Heart right ventricle (tissue), 16 donors: ENCODE measurements at regions of chr7 and their contacts with region 1.

Region 1: DNA sequence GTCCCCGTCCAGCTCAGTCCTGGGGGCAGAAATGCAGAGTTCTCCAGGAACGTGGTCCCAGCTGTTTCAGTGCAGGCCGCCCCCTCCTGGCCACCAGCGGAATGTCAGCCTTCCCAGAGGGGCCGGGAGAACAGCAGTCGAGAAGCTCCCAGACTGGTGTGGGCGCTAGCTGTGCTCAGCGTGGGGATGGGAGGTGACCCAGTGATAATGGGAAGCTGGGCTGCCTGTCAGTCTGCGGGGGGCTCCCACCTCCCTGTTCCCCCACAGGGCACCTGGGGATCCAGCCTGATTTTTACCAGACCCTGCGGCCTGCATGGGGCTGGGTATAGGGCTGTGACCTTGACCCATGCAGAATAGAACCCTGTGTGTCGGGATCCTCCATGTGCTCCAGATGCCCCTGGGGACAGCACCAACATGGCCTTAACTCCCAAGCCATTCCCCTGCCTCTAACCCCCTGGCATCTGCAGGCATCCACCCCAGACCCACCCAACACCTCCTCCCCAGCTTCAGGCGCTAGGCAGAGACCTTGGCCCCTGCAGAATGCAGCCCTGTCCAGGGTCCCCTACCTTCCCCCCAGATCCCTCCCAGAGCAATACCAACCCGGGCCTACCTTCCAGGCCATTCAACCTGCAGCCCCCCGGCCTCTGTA is 946 bp upstream of the ELN start:
- DNase-seq: peak; percentile 85
- ATAC-seq: peak; percentile 58 to 76 (median 73)
- H3K4me3 ChIP-seq: peak overlapping the region in 5 of 10 donors; percentile 60 to 77 (median 64)
- H3K27ac ChIP-seq: peak overlapping the region; percentile 8 to 92 (median 82)
- H3K4me1 ChIP-seq: peaks cover 10 to 79% (median 49%) of the 10 kb centered on the region in 9 donors
- H3K27me3 ChIP-seq: peaks cover 0 to 62% (median 10%) of the 10 kb centered on the region in 7 donors
- CTCF ChIP-seq: peak; percentile 91 to 97 (median 94)

Region 2: GRCh38 chr7:73865738-73866445 is 161.1 kb before region 1 on chr7:
- intact Hi-C with region 1: loop called (anchors 1 to 5 kb)
- DNase-seq: no peak
- ATAC-seq: peak in 7 of 8 donors; percentile 47 to 84 (median 62)
- H3K4me3 ChIP-seq: no peak overlapping the region
- H3K27ac ChIP-seq: no peak overlapping the region
- H3K4me1 ChIP-seq: peaks cover 0 to 23% (median 9%) of the 10 kb centered on the region in 9 donors
- H3K27me3 ChIP-seq: peaks cover 0 to 4% (median 0%) of the 10 kb centered on the region in 7 donors
- CTCF ChIP-seq: peak; percentile 55 to 79 (median 71)

Region 3: GRCh38 chr7:73879977-73880681 is 146.9 kb before region 1 on chr7:
- intact Hi-C with region 1: loop called in 2 of 10 experiments (anchors 5 kb)
- DNase-seq: peak in 1 of 2 donors; percentile 66
- ATAC-seq: peak; percentile 29 to 82 (median 54)
- H3K4me3 ChIP-seq: no peak overlapping the region
- H3K27ac ChIP-seq: peak overlapping the region in 9 of 10 donors; percentile 19 to 90 (median 78)
- H3K4me1 ChIP-seq: peaks cover 25 to 50% (median 31%) of the 10 kb centered on the region in 9 donors
- H3K27me3 ChIP-seq: peaks cover 0 to 10% (median 0%) of the 10 kb centered on the region in 7 donors
- CTCF ChIP-seq: no peak

Region 4: DNA sequence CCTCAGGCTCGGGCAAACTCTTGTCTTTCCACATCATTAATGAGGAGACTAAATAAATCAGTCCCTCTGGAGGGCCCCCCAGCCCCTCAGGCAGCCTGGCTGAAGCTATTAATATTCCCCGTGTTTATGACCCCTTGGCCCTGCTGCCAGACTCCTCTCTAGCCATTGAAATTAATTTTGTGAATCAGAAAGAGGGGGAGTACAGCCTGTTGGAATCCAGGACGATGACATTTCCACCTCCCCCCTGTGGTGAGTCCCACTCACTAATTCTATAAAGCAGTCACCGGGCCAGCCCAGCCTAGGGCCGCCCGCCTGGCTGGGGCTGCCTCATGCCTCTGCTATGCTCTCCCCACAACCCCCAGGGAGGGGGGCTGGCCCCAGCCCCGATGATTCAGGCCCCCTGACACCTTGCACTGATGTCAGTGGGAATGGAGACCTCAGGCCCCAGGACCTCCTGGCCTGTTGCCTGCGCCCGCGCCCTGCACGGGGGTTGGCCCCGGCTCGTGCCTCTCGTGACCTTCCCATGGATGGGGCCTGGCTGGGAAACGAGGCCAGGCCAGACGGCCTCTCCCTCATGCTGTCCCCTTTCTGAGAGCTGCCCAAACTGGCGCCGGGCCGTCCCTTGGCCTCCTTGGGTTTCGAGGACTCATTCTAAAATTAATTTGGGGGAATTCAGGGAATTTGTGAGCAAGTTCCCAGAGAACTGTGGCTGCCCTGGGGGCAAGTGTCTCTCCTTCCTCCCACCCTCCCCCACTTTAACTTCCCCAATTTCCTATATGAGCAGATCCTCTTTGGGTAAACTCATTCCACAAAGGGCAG is 132.1 kb before region 1 on chr7:
- intact Hi-C with region 1: loop called in 3 of 10 experiments (anchors 5 to 10 kb)
- DNase-seq: peak; percentile 71 to 86
- ATAC-seq: peak; percentile 61 to 80 (median 78)
- H3K4me3 ChIP-seq: no peak overlapping the region
- H3K27ac ChIP-seq: peak overlapping the region in 8 of 10 donors; percentile 10 to 74 (median 62)
- H3K4me1 ChIP-seq: peaks cover 0 to 54% (median 15%) of the 10 kb centered on the region in 9 donors
- H3K27me3 ChIP-seq: no peaks in the 10 kb centered on the region
- CTCF ChIP-seq: peak in 1 of 9 donors; percentile 6

Region 5: GRCh38 chr7:73986158-73986631 is 40.8 kb before region 1 on chr7:
- intact Hi-C with region 1: loop called in 3 of 10 experiments (anchors 5 kb)
- DNase-seq: peak; percentile 35 to 79
- ATAC-seq: peak; percentile 40 to 87 (median 74)
- H3K4me3 ChIP-seq: no peak overlapping the region
- H3K27ac ChIP-seq: peak overlapping the region in 8 of 10 donors; percentile 32 to 58 (median 46)
- H3K4me1 ChIP-seq: peaks cover 0 to 31% (median 10%) of the 10 kb centered on the region in 9 donors
- H3K27me3 ChIP-seq: no peaks in the 10 kb centered on the region
- CTCF ChIP-seq: no peak

Region 6: DNA sequence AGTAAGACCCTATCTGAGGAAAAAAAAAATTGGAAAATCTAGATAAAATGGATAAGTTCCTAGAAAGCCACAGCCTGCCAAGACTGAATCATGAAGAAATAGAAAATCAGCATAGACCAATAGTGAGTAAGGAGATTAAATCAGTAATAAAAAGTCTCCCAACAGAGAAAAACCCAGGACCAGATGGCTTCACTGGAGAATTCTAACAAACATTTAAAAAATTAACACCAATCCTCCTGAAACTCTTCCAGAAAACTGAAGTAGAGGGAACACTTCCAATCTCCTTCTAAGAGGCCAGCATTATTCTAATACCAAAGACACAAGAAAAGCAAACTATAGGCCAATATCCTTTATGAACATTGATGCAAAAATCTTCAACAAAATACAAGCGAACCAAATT is 47.7 kb after region 1 on chr7:
- intact Hi-C with region 1: no loop called
- DNase-seq: no peak
- ATAC-seq: no peak
- H3K4me3 ChIP-seq: no peak overlapping the region
- H3K27ac ChIP-seq: no peak overlapping the region
- H3K4me1 ChIP-seq: peaks cover 0 to 5% (median 0%) of the 10 kb centered on the region in 9 donors
- H3K27me3 ChIP-seq: no peaks in the 10 kb centered on the region
- CTCF ChIP-seq: no peak